ENCODE measurements at regions of chr1 and their contacts with region 1.

Region 1: GRCh38 chr1:2214541-2215281 is 13.4 kb upstream of the SKI start:
- DNase-seq: peak in 1 of 2 donors; percentile 80
- H3K4me3 ChIP-seq: peak overlapping the region in 1 of 2 donors; percentile 51
- H3K27ac ChIP-seq: peak overlapping the region; percentile 91 to 100
- H3K4me1 ChIP-seq: peaks cover 16 to 52% (median 46%) of the 10 kb centered on the region in 4 donors
- H3K27me3 ChIP-seq: no peaks in the 10 kb centered on the region
- CTCF ChIP-seq: no peak

Region 2: DNA sequence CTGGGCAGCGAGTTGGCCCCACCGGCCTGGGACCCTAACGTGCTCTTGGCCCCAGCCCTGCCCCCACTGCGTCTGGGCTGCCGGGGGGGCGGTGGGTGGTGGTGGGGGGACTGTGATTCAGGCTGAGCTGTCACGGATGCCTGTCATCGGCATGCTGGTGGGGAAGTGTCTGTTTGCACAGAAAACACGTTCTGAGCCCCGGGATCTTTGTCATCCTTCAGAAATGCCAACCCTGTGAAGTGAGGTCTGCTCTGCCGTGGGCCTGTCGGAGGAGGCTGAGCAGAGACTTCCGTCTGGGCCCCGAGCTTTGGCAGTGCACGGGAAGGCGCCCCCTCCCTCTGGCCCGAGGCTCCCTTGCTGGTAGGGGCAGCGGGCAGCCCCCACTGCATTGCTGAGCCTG is 237.0 kb after region 1 on chr1:
- intact Hi-C with region 1: no loop called
- DNase-seq: no peak
- H3K4me3 ChIP-seq: no peak overlapping the region
- H3K27ac ChIP-seq: no peak overlapping the region
- H3K4me1 ChIP-seq: peaks cover 0 to 6% (median 0%) of the 10 kb centered on the region in 4 donors
- H3K27me3 ChIP-seq: peaks cover 0 to 97% of the 10 kb centered on the region in 2 donors
- CTCF ChIP-seq: no peak

Region 3: GRCh38 chr1:3192825-3193224 is 978.1 kb after region 1 on chr1:
- intact Hi-C with region 1: loop called (anchors 5 kb)
- DNase-seq: peak in 1 of 2 donors; percentile 87
- H3K4me3 ChIP-seq: no peak overlapping the region
- H3K27ac ChIP-seq: peak overlapping the region; percentile 91 to 98
- H3K4me1 ChIP-seq: peaks cover 0 to 97% (median 90%) of the 10 kb centered on the region in 4 donors
- H3K27me3 ChIP-seq: no peaks in the 10 kb centered on the region
- CTCF ChIP-seq: no peak